Gastrocnemius medialis (tissue), 4 donors: ENCODE measurements at regions of chr12 and their contacts with region 1.

Region 1: GRCh38 chr12:124767066-124767821 is 96.4 kb downstream of the SCARB1 start:
- DNase-seq: peak; percentile 54 to 69
- ATAC-seq: peak; percentile 43 to 64
- H3K4me3 ChIP-seq: no peak overlapping the region
- H3K27ac ChIP-seq: peak overlapping the region; percentile 80 to 86 (median 84)
- H3K4me1 ChIP-seq: peaks cover 40 to 44% of the 10 kb centered on the region in 2 donors
- H3K27me3 ChIP-seq: no peaks in the 10 kb centered on the region
- CTCF ChIP-seq: peak; percentile 98 to 100 (median 99)
- POLR2A ChIP-seq: no peak

Region 2: GRCh38 chr12:124036674-124037109 is 730.6 kb before region 1 on chr12:
- in situ Hi-C with region 1: loop called (anchors 5 to 10 kb)
- intact Hi-C with region 1: loop called (anchors 1 kb)
- DNase-seq: no peak
- ATAC-seq: peak in 1 of 2 donors; percentile 49
- H3K4me3 ChIP-seq: no peak overlapping the region
- H3K27ac ChIP-seq: no peak overlapping the region
- H3K4me1 ChIP-seq: no peaks in the 10 kb centered on the region
- H3K27me3 ChIP-seq: no peaks in the 10 kb centered on the region
- CTCF ChIP-seq: peak; percentile 81 to 91 (median 86)
- POLR2A ChIP-seq: no peak

Region 3: GRCh38 chr12:124327362-124328043 is 439.7 kb before region 1 on chr12:
- in situ Hi-C with region 1: no loop called
- intact Hi-C with region 1: loop called (anchors 5 kb)
- DNase-seq: peak; percentile 45 to 69
- ATAC-seq: peak; percentile 73 to 80
- H3K4me3 ChIP-seq: no peak overlapping the region
- H3K27ac ChIP-seq: peak overlapping the region; percentile 83 to 91 (median 88)
- H3K4me1 ChIP-seq: peaks cover 22 to 26% of the 10 kb centered on the region in 2 donors
- H3K27me3 ChIP-seq: no peaks in the 10 kb centered on the region
- CTCF ChIP-seq: no peak
- POLR2A ChIP-seq: no peak

Region 4: DNA sequence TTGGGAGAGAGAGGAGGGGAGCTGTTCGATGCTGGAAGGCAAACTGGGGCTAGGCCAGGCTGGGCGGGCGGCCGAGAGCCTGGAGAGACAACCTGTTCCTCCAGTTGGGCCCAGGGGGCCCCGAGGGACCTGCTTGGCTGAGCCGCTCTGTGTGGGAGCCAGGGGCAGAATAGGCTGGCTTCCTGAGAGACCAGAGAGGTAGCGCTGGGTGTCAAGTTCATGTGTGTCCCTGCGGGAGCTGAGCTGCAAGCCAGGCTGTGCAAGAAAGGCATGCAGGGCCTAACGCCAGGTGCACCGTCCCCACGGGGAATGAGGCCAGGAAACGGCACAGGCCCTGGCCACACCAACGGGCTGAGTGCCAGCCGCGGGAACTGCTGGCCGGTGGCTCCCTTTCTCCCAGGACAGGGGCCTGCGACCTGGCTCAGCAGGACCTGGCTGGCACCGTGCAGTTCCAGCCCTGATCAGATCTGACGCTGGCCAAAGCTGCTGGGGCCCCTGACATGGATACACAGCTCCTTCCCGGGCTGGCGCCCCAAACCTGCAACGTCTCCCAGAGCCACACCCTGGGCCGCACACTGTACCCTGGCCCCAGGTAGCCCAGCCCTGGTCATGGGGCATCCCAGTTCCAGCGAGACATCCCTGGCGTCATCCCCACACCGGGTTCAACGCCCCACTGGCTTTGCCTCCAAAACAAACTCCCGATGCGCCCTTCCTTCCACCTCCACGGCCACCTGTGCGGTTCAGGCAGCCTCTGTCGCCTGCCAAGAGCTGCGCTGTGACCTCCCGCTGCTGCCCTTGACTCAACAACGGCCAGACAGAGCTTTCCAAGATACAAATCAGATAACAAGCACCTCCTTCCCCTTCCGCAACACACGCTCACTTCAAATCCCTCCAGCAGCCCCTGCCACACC is 407.3 kb before region 1 on chr12:
- in situ Hi-C with region 1: loop called in 3 of 4 experiments (anchors 10 to 25 kb)
- intact Hi-C with region 1: no loop called
- DNase-seq: peak; percentile 95 to 99
- ATAC-seq: peak; percentile 83 to 86
- H3K4me3 ChIP-seq: no peak overlapping the region
- H3K27ac ChIP-seq: peak overlapping the region; percentile 93 to 98 (median 97)
- H3K4me1 ChIP-seq: peaks cover 59 to 66% of the 10 kb centered on the region in 2 donors
- H3K27me3 ChIP-seq: no peaks in the 10 kb centered on the region
- CTCF ChIP-seq: peak in 1 of 5 experiments; percentile 11
- POLR2A ChIP-seq: no peak

Region 5: DNA sequence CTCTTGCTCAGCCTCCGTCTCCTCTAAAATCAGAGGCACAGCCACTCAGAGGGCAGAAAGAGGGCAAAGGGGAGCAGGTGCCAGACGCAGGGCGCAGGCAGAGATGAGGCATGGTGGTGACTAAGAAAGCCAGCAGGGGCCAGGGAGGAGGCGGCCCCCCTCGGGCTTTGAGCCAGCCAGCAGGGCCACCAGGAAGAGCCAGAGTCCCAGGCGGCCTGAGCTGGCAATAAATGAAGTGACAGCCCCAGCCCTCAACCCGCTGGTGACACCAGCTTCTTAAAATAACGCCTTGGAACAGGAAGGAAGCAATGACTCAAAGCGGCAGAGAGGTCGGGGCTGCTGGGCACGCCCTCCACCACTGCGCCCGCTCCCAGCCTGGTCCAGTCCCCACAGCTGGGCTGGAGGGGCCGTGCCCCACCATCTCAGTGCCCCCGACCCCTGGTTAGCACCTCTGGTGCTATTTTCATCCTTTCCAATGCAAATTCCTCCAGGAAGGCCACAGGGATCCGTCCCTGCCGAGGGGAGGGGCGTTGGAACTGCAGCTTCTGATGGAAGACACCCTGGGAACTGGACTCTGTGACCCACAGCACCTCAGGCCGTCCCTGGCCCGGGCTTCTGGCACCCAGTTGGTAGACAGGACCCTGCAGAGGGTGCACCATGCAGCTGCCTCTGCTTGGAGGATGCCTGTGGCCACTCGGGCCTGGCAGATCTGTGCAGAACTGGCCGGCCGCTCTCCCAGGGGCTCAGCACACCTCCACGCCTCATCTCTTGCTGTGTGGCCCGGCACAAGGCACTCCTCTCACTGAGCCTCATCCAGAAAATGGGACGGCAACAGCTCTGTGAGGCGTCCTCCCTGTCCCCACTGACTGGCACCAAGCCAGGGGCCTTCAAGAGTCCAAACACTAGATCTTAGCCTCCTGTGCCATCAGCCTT is 313.6 kb before region 1 on chr12:
- in situ Hi-C with region 1: no loop called
- intact Hi-C with region 1: loop called (anchors 5 kb)
- DNase-seq: peak; percentile 91 to 96
- ATAC-seq: peak; percentile 73 to 79
- H3K4me3 ChIP-seq: peak overlapping the region; percentile 21 to 42 (median 32)
- H3K27ac ChIP-seq: peak overlapping the region; percentile 90 to 99 (median 93)
- H3K4me1 ChIP-seq: peaks cover 55 to 68% of the 10 kb centered on the region in 2 donors
- H3K27me3 ChIP-seq: no peaks in the 10 kb centered on the region
- CTCF ChIP-seq: peak in 2 of 5 experiments; percentile 8 to 22
- POLR2A ChIP-seq: peak; percentile 66 to 74

Region 6: DNA sequence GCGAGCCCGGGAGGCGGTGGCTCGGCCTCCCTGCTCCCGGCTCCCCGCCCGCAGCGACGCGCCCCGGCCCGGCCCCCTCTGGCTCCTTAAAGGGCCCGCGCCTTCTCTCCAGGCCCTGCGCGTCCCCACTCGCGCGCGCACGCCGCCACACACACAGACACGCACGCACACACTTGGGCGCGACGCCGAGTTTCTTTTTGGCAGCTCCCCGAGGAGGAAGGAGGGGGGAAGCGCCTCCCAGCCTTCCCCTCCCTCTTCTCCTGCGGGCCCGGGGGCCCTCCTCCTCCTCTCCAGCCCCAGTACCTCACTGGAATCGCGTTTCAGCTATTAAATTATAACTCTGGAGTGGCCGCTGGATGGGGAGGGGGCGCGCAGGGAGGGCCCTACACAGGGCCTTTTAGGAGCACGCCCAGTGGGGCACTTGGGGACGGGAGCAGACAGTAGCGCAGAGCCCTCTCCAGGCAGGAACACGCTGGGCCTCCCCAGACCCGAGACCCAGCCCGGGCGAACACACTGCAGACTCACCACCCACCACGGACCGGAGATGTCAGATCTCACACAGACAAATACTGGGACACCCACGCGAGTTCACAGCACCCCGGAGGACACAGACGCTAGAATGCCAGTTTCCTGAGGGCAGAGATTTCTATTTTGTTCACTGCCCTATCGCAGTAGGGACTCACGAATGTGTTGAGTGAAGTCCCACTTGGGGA is 199.4 kb before region 1 on chr12:
- in situ Hi-C with region 1: loop called in 3 of 4 experiments (anchors 5 to 10 kb)
- intact Hi-C with region 1: loop called (anchors 1 kb)
- DNase-seq: peak; percentile 81 to 86
- ATAC-seq: peak; percentile 76 to 79
- H3K4me3 ChIP-seq: peak overlapping the region; percentile 58 to 93 (median 68)
- H3K27ac ChIP-seq: peak overlapping the region; percentile 91 to 98 (median 93)
- H3K4me1 ChIP-seq: peaks cover 27 to 38% of the 10 kb centered on the region in 2 donors
- H3K27me3 ChIP-seq: no peaks in the 10 kb centered on the region
- CTCF ChIP-seq: peak in 2 of 5 experiments; percentile 11 to 30
- POLR2A ChIP-seq: no peak

Region 7: DNA sequence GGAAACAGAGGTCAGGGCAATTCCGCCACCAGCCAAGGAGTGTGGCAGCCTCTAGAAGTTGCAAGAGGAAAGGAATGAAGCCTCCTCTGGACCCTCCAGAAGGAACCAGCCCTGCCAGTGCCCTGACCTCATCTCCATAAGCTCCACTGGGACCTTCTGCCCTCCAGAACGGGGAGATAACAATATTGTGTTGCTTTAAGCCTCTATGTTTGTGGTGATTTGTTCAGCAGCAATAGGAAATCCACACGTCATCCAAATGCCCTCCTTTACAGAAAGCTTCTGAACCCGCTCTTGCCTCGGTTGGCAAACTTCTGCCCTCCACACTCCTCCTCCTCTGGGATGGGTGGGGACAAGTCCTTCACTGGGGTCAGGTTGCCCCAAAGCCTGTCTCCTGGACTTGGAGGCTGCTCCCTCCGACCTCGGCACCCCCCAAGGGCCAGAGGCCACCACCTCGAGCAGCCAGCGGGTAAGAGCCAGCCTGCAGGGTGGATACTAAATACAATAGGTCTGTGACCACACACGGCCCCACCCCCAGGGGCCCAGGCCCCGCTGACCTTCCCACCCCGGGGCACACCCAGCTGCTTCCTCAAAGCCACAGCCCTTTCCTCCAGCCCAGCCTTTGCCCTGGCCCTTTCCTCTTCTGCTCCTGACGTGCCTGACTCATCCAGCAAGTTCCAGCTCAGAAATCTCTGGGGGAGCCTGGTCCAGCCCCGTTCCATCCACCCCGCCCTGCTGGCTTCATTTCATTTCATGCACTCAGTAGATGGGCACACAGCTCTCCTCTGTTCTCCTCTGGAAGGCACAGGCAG is 141.2 kb before region 1 on chr12:
- in situ Hi-C with region 1: no loop called
- intact Hi-C with region 1: loop called (anchors 10 kb)
- DNase-seq: peak; percentile 72 to 81
- ATAC-seq: peak; percentile 81 to 82
- H3K4me3 ChIP-seq: no peak overlapping the region
- H3K27ac ChIP-seq: peak overlapping the region; percentile 72 to 85 (median 74)
- H3K4me1 ChIP-seq: peaks cover 18 to 27% of the 10 kb centered on the region in 2 donors
- H3K27me3 ChIP-seq: no peaks in the 10 kb centered on the region
- CTCF ChIP-seq: no peak
- POLR2A ChIP-seq: peak; percentile 7 to 22